ENCODE measurements at regions of chr16 and their contacts with region 1.

Region 1: DNA sequence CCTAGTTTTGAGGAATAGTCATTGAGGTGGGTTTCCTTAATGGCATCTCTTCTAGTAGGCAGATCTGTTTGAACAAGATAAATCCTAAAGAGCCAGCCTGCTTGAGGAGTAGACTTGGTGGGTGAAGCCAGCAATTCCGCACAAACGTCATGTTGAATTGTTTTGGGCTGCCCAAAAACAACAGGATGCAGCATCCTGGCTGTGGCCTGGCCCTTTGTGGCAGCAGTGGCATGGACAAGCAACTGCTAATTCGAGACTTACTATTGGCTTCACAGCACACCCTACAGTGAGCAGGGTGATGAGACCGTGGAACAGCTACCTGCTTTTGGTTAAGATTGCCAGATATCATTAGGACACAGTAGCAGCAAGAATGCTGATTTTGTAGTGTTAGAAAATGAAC is 9.3 kb upstream of the VPS4A start:
- DNase-seq: no peak
- H3K4me3 ChIP-seq: no peak overlapping the region
- H3K27ac ChIP-seq: no peak overlapping the region
- H3K4me1 ChIP-seq: no peaks in the 10 kb centered on the region
- H3K27me3 ChIP-seq: no peaks in the 10 kb centered on the region
- CTCF ChIP-seq: no peak

Region 2: GRCh38 chr16:69132424-69133252 is 169.2 kb before region 1 on chr16 and contains the starts of genes CHTF8 and UTP4:
- CTCF ChIA-PET with region 1: no interaction called
- dilution Hi-C with region 1: loop called (anchors 5 kb)
- in situ Hi-C with region 1: no loop called
- intact Hi-C with region 1: no loop called
- DNase-seq: peak; percentile 75
- H3K4me3 ChIP-seq: peak within 1 kb of the TSS; percentile 95 to 99 (median 97)
- H3K27ac ChIP-seq: peak within 1 kb of the TSS; percentile 78
- H3K4me1 ChIP-seq: peaks cover 17% of the 10 kb centered on the region
- H3K27me3 ChIP-seq: no peaks in the 10 kb centered on the region
- CTCF ChIP-seq: no peak
- total RNA-seq, gene CHTF8: 48.2 to 132 TPM
- total RNA-seq, gene UTP4: 27.5 to 94.7 TPM